CD8-positive, alpha-beta T cell (primary cell): ENCODE measurements at regions of chr18 and their contacts with region 1.

Region 1: DNA sequence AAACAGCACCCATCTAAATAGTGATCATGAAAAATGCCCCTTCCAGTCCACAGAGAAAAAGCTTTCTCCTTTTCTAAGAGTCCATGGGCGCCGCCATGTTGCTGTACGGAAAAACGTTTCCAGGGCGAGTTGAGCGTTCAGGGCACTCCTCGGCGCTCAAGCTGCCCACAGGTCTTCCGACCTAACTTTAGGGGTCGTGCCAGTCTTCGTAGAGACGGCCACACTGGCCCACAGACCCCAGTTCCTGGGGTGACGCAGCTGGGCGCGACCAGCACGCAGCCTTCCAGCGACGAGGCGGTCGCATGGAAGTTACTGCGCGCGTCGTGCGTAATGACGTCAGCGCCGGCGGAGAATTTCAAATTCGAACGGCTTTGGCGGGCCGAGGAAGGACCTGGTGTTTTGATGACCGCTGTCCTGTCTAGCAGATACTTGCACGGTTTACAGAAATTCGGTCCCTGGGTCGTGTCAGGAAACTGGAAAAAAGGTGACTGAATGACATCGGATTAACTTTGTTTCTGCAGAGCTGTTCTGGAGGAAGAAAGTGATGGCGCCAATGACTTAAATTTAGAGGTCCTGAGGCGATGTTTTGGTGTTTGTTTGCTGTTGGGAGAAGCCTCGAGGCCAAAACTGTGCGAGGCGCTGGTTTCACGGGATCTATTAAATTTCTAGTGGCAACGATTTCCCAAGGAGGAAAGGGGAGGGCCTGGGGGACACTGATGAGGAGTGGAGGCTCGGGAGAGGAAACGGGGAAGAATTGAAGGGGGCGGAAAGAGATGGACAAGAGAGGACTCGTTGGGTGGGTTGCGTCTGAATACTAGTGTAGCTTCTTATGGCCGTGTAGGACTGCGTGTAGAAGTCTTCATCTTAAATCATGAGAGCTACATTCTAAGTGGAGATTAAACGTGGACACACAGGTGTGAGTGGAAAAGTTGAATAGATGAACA is at the starts of genes METTL4 and NDC80:
- DNase-seq: peak; percentile 71 to 93 (median 85)
- ATAC-seq: peak; percentile 84
- H3K4me3 ChIP-seq: peak within 1 kb of the TSS; percentile 77 to 89
- H3K4me3 Mint-ChIP-seq: peak within 1 kb of the TSS; percentile 99
- H3K27ac ChIP-seq: peak within 1 kb of the TSS; percentile 97 to 99
- H3K27ac Mint-ChIP-seq: peak within 1 kb of the TSS; percentile 100
- H3K4me1 ChIP-seq: peaks cover 27% of the 10 kb centered on the region
- H3K4me1 Mint-ChIP-seq: peaks cover 65% of the 10 kb centered on the region
- H3K27me3 ChIP-seq: no peaks in the 10 kb centered on the region
- H3K27me3 Mint-ChIP-seq: no peaks in the 10 kb centered on the region
- CTCF ChIP-seq: no peak
- total RNA-seq, gene METTL4: 4.8 to 5.4 TPM
- total RNA-seq, gene NDC80: 5.6 to 7.1 TPM

Region 2: DNA sequence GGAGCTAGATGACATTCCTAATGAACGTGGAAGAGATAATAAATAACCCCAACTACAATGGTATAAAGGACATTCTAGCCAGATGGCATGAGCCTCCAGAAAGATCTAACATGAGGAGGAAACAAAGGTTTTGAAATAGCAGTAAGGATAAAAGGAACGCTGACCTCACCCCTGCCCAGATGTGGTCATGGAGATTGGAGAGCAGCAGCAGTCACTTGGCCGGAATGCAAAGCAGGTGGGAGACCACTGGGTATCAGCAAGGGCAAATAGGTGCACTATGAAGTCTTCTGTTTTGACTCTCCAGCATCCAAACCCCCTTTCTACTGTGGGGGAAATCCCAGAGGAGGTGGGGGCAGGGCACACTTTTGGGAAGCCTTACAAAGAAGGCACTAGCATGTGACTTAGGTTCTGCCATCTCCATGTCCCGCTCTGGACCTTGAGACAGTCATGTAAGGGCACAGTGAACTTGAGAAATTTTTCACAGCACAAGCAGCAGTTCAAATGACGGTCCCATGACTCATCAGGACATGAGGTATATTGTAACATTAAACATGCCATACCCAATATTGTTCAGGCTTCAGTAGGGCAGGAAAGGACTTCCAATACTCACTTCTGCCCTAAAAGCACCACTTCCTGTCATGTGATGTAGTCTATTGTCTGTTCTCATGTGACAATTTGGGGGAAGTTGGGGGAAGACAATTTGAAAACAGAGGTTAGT is 55.4 kb before region 1 on chr18:
- CTCF ChIA-PET with region 1: no interaction called
- POLR2A ChIA-PET with region 1: no interaction called
- intact Hi-C with region 1: no loop called
- DNase-seq: peak in 2 of 9 experiments; percentile 12 to 43
- ATAC-seq: peak; percentile 75
- H3K4me3 ChIP-seq: no peak overlapping the region
- H3K4me3 Mint-ChIP-seq: no peak overlapping the region
- H3K27ac ChIP-seq: no peak overlapping the region
- H3K27ac Mint-ChIP-seq: peak overlapping the region; percentile 66
- H3K4me1 ChIP-seq: peaks cover 18% of the 10 kb centered on the region
- H3K4me1 Mint-ChIP-seq: peaks cover 18% of the 10 kb centered on the region
- H3K27me3 ChIP-seq: no peaks in the 10 kb centered on the region
- H3K27me3 Mint-ChIP-seq: no peaks in the 10 kb centered on the region
- CTCF ChIP-seq: no peak

Region 3: GRCh38 chr18:2589345-2590068 is 18.0 kb after region 1 on chr18:
- CTCF ChIA-PET with region 1: no interaction called
- POLR2A ChIA-PET with region 1: interaction called, 12 read pairs
- intact Hi-C with region 1: loop called in 1 of 2 experiments (anchors 1 kb)
- DNase-seq: peak in 2 of 9 experiments; percentile 28 to 62
- ATAC-seq: peak; percentile 76
- H3K4me3 ChIP-seq: peak overlapping the region; percentile 38 to 50
- H3K4me3 Mint-ChIP-seq: peak overlapping the region; percentile 71
- H3K27ac ChIP-seq: peak overlapping the region; percentile 42 to 92
- H3K27ac Mint-ChIP-seq: peak overlapping the region; percentile 92
- H3K4me1 ChIP-seq: peaks cover 46% of the 10 kb centered on the region
- H3K4me1 Mint-ChIP-seq: peaks cover 53% of the 10 kb centered on the region
- H3K27me3 ChIP-seq: no peaks in the 10 kb centered on the region
- H3K27me3 Mint-ChIP-seq: no peaks in the 10 kb centered on the region
- CTCF ChIP-seq: no peak

Region 4: GRCh38 chr18:2606335-2606734 is 34.9 kb after region 1 on chr18:
- CTCF ChIA-PET with region 1: interaction called, 4 read pairs
- POLR2A ChIA-PET with region 1: interaction called, 11 read pairs
- intact Hi-C with region 1: loop called (anchors 1 to 2 kb)
- DNase-seq: peak in 2 of 9 experiments; percentile 38 to 70
- ATAC-seq: peak; percentile 56
- H3K4me3 ChIP-seq: no peak overlapping the region
- H3K4me3 Mint-ChIP-seq: peak overlapping the region; percentile 43
- H3K27ac ChIP-seq: peak overlapping the region; percentile 19 to 74
- H3K27ac Mint-ChIP-seq: peak overlapping the region; percentile 85
- H3K4me1 ChIP-seq: peaks cover 33% of the 10 kb centered on the region
- H3K4me1 Mint-ChIP-seq: peaks cover 54% of the 10 kb centered on the region
- H3K27me3 ChIP-seq: no peaks in the 10 kb centered on the region
- H3K27me3 Mint-ChIP-seq: no peaks in the 10 kb centered on the region
- CTCF ChIP-seq: no peak

Region 5: DNA sequence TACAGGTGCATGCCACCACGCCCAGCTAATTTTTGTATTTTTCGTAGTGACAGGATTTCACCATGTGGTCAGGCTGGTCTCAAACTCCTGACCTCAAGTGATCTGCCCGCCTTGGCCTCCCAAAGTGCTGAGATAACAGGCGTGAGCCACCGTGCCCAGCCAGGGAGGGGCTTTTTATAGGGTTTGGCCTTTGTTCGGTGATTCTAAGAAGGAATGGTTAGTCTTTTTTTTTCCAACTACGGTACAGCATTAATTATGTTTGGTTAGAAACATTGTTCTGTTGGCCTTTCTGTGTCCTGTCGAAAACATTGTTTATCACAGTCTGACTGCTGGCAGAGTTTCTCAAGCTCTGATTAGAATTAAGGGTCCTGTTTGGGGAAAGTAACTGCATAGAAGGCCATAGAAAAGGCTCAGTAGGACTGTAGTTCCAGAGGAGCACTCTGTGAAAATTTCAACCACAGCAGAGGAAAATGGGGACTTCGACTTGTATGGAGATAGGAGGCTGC is 64.7 kb after region 1 on chr18:
- CTCF ChIA-PET with region 1: interaction called, 8 read pairs
- POLR2A ChIA-PET with region 1: interaction called, 58 read pairs
- intact Hi-C with region 1: loop called (anchors 1 to 2 kb)
- DNase-seq: peak in 2 of 9 experiments; percentile 22 to 65
- ATAC-seq: peak; percentile 43
- H3K4me3 ChIP-seq: peak overlapping the region; percentile 41 to 44
- H3K4me3 Mint-ChIP-seq: peak overlapping the region; percentile 83
- H3K27ac ChIP-seq: peak overlapping the region; percentile 92 to 95
- H3K27ac Mint-ChIP-seq: peak overlapping the region; percentile 100
- H3K4me1 ChIP-seq: peaks cover 64% of the 10 kb centered on the region
- H3K4me1 Mint-ChIP-seq: peaks cover 88% of the 10 kb centered on the region
- H3K27me3 ChIP-seq: no peaks in the 10 kb centered on the region
- H3K27me3 Mint-ChIP-seq: no peaks in the 10 kb centered on the region
- CTCF ChIP-seq: no peak

Region 6: DNA sequence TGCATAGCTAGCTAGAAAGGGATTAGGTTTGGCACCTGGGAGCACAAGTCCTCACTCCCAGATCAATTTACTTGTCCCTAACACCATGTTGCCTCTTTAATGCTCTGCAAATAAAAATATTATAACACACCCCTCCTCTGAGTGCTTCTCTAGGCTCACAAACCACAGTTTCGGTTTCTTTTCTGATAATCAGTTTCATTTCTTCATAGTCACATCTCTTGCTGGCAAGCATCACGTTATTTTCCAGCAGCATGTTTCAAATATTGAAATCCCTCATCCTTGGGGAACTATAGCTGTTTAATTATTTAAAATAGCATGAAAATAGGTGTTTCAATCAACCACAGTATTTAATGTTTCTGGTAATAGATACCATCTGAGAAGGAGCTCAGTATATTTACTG is 70.2 kb after region 1 on chr18:
- CTCF ChIA-PET with region 1: interaction called, 8 read pairs
- POLR2A ChIA-PET with region 1: interaction called, 58 read pairs
- intact Hi-C with region 1: loop called in 1 of 2 experiments (anchors 1 kb)
- DNase-seq: peak in 2 of 9 experiments; percentile 62 to 83
- ATAC-seq: peak; percentile 31
- H3K4me3 ChIP-seq: peak overlapping the region; percentile 22 to 29
- H3K4me3 Mint-ChIP-seq: peak overlapping the region; percentile 79
- H3K27ac ChIP-seq: peak overlapping the region; percentile 40 to 92
- H3K27ac Mint-ChIP-seq: peak overlapping the region; percentile 95
- H3K4me1 ChIP-seq: peaks cover 72% of the 10 kb centered on the region
- H3K4me1 Mint-ChIP-seq: peaks cover 48% of the 10 kb centered on the region
- H3K27me3 ChIP-seq: no peaks in the 10 kb centered on the region
- H3K27me3 Mint-ChIP-seq: no peaks in the 10 kb centered on the region
- CTCF ChIP-seq: no peak

Region 7: GRCh38 chr18:2906704-2907549 is 335.5 kb after region 1 on chr18:
- CTCF ChIA-PET with region 1: no interaction called
- POLR2A ChIA-PET with region 1: no interaction called
- intact Hi-C with region 1: loop called in 1 of 2 experiments (anchors 5 kb)
- DNase-seq: peak in 8 of 9 experiments; percentile 26 to 71 (median 45)
- ATAC-seq: peak; percentile 71
- H3K4me3 ChIP-seq: peak overlapping the region; percentile 63 to 70
- H3K4me3 Mint-ChIP-seq: peak overlapping the region; percentile 82
- H3K27ac ChIP-seq: peak overlapping the region; percentile 44 to 69
- H3K27ac Mint-ChIP-seq: peak overlapping the region; percentile 77
- H3K4me1 ChIP-seq: peaks cover 7% of the 10 kb centered on the region
- H3K4me1 Mint-ChIP-seq: peaks cover 17% of the 10 kb centered on the region
- H3K27me3 ChIP-seq: no peaks in the 10 kb centered on the region
- H3K27me3 Mint-ChIP-seq: no peaks in the 10 kb centered on the region
- CTCF ChIP-seq: peak; percentile 28

Region 8: GRCh38 chr18:3119401-3120335 is 548.2 kb after region 1 on chr18:
- CTCF ChIA-PET with region 1: no interaction called
- POLR2A ChIA-PET with region 1: no interaction called
- intact Hi-C with region 1: no loop called
- DNase-seq: no peak
- ATAC-seq: no peak
- H3K4me3 ChIP-seq: no peak overlapping the region
- H3K4me3 Mint-ChIP-seq: no peak overlapping the region
- H3K27ac ChIP-seq: no peak overlapping the region
- H3K27ac Mint-ChIP-seq: no peak overlapping the region
- H3K4me1 ChIP-seq: no peaks in the 10 kb centered on the region
- H3K4me1 Mint-ChIP-seq: no peaks in the 10 kb centered on the region
- H3K27me3 ChIP-seq: no peaks in the 10 kb centered on the region
- H3K27me3 Mint-ChIP-seq: no peaks in the 10 kb centered on the region
- CTCF ChIP-seq: no peak

Region 9: DNA sequence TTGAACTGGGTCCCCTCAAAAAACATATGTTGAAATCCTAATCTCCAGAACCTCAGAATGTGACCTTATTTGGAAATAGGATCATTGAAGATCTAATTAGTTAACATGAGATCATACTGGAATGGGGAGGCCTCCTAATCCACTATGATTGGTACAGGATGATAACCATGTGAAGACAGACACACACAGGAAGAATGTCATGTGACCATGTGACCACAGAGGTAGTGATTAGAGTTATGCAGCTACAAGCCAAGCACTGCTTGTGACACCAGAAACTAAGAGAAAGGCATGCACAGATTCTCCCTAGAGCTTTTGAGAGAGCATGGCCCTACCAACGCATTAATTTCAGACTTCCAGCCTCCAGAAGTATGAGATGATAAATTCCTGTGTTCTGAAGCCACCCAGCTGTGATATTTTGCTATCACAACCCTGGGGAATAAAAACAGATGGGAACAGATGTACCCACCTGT is 831.5 kb after region 1 on chr18:
- CTCF ChIA-PET with region 1: no interaction called
- POLR2A ChIA-PET with region 1: no interaction called
- intact Hi-C with region 1: no loop called
- DNase-seq: peak in 2 of 9 experiments; percentile 10 to 39
- ATAC-seq: no peak
- H3K4me3 ChIP-seq: no peak overlapping the region
- H3K4me3 Mint-ChIP-seq: no peak overlapping the region
- H3K27ac ChIP-seq: no peak overlapping the region
- H3K27ac Mint-ChIP-seq: no peak overlapping the region
- H3K4me1 ChIP-seq: peaks cover 10% of the 10 kb centered on the region
- H3K4me1 Mint-ChIP-seq: peaks cover 17% of the 10 kb centered on the region
- H3K27me3 ChIP-seq: no peaks in the 10 kb centered on the region
- H3K27me3 Mint-ChIP-seq: no peaks in the 10 kb centered on the region
- CTCF ChIP-seq: no peak